Activated CD8-positive, alpha-beta T cell treated with anti-CD3 and anti-CD28 coated beads for 36 hours (primary cell): ENCODE measurements at regions of chr7 and their contacts with region 1.

Region 1: GRCh38 chr7:107168233-107169119 is at the start of gene HBP1:
- DNase-seq: peak; percentile 99
- ATAC-seq: peak; percentile 82
- H3K4me3 Mint-ChIP-seq: peak within 1 kb of the TSS; percentile 90
- H3K27ac Mint-ChIP-seq: peak within 1 kb of the TSS; percentile 99
- H3K4me1 Mint-ChIP-seq: peaks cover 20% of the 10 kb centered on the region
- H3K27me3 Mint-ChIP-seq: no peaks in the 10 kb centered on the region
- CTCF ChIP-seq: no peak
- total RNA-seq, gene HBP1: 23.8 to 30.5 TPM

Region 2: DNA sequence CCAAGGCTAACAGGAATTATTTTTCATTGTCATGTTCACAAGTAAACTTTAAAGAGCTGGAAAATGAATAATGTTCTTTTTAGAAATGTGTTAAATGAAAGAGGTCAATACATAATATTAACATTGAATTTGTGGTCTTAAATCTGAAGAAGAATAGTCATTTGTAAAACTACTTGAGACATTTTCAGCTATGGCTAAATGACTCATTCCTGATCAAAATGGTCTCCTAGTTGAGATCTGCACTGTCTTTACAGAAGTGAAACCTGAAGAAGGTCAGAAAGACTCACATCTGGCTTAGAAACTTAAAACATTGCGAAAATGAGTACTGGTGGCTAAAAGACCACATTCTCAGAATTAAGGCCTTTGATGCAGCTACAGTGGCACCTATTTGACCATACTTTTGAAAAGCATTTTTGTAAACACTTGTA is 297.5 kb before region 1 on chr7:
- CTCF ChIA-PET with region 1: no interaction called
- POLR2A ChIA-PET with region 1: interaction called, 3 read pairs
- intact Hi-C with region 1: loop called (anchors 5 kb)
- DNase-seq: no peak
- ATAC-seq: peak; percentile 85
- H3K4me3 Mint-ChIP-seq: peak overlapping the region; percentile 48
- H3K27ac Mint-ChIP-seq: peak overlapping the region; percentile 76
- H3K4me1 Mint-ChIP-seq: peaks cover 74% of the 10 kb centered on the region
- H3K27me3 Mint-ChIP-seq: no peaks in the 10 kb centered on the region
- CTCF ChIP-seq: no peak

Region 3: GRCh38 chr7:107069457-107069856 is 99.0 kb before region 1 on chr7:
- CTCF ChIA-PET with region 1: no interaction called
- POLR2A ChIA-PET with region 1: no interaction called
- intact Hi-C with region 1: no loop called
- DNase-seq: no peak
- ATAC-seq: no peak
- H3K4me3 Mint-ChIP-seq: no peak overlapping the region
- H3K27ac Mint-ChIP-seq: no peak overlapping the region
- H3K4me1 Mint-ChIP-seq: no peaks in the 10 kb centered on the region
- H3K27me3 Mint-ChIP-seq: peaks cover 2% of the 10 kb centered on the region
- CTCF ChIP-seq: no peak

Region 4: DNA sequence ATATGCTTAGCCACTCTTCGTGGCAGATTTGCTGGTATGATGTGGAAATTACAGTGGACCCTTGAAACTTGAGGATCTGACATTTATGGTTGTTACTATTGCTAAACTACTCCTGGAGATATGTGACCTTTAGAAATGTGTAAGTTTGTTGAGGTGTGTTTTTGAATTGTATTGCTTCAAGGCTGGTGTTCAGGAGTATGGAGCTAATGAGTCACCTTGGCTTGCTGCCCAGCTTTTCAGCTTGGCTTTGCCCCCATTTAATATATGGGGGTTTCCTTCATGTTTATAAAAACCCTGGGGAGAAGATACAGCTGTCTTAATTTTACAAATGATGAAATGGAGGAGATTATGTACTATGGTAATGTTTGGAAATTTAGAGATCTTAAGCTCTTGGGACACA is 11.9 kb after region 1 on chr7:
- CTCF ChIA-PET with region 1: interaction called, 15 read pairs
- POLR2A ChIA-PET with region 1: interaction called, 23 read pairs
- intact Hi-C with region 1: loop called (anchors 1 kb)
- DNase-seq: peak; percentile 95
- ATAC-seq: peak; percentile 83
- H3K4me3 Mint-ChIP-seq: peak overlapping the region; percentile 48
- H3K27ac Mint-ChIP-seq: peak overlapping the region; percentile 94
- H3K4me1 Mint-ChIP-seq: peaks cover 53% of the 10 kb centered on the region
- H3K27me3 Mint-ChIP-seq: no peaks in the 10 kb centered on the region
- CTCF ChIP-seq: no peak

Region 5: GRCh38 chr7:107372298-107372697 is 203.8 kb after region 1 on chr7:
- CTCF ChIA-PET with region 1: no interaction called
- POLR2A ChIA-PET with region 1: no interaction called
- intact Hi-C with region 1: no loop called
- DNase-seq: no peak
- ATAC-seq: no peak
- H3K4me3 Mint-ChIP-seq: no peak overlapping the region
- H3K27ac Mint-ChIP-seq: no peak overlapping the region
- H3K4me1 Mint-ChIP-seq: no peaks in the 10 kb centered on the region
- H3K27me3 Mint-ChIP-seq: no peaks in the 10 kb centered on the region
- CTCF ChIP-seq: no peak

Region 6: DNA sequence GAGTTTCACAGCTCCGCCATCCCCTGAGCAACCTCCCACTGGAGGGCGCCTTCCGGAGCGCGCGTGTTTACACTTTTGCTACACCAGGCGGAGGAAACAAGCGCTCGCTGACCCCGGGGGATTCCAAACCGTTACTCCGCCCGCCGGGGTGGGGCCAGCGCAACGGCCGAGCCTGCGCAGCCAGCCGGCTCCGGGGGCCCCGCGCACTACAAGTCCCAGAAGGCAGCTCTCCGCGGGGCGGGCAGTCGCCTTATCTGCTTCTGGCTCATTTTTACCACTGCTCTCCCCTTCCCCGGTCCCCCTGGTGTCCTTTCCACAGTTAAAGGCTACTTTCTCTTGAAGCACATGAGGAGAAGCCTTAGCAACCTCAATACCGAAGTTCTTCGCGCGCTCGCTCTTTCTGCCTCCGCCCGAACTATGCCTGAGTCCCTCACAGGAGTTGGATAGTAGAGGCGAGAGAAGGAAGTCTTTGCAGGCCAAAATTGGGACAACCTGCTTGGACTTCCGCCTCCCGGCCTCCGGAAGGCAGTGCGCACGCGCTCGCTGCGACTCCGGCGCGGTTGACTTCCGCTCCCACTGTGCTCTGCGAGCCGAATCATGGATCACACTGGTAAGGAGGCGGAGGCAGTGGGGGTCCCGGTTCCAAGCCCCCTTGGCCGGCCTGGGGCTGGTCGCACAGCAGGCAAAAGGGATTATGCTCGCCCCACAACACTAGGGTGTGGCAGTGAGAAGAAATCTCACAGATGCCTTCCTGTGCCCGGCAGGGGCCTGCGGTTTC is 575.3 kb after region 1 on chr7 and contains the start of gene CBLL1:
- CTCF ChIA-PET with region 1: interaction called, 3 read pairs
- POLR2A ChIA-PET with region 1: interaction called, 17 read pairs
- intact Hi-C with region 1: no loop called
- DNase-seq: peak; percentile 99
- ATAC-seq: peak; percentile 94
- H3K4me3 Mint-ChIP-seq: peak within 1 kb of the TSS; percentile 87
- H3K27ac Mint-ChIP-seq: peak within 1 kb of the TSS; percentile 100
- H3K4me1 Mint-ChIP-seq: peaks cover 40% of the 10 kb centered on the region
- H3K27me3 Mint-ChIP-seq: no peaks in the 10 kb centered on the region
- CTCF ChIP-seq: peak; percentile 69
- total RNA-seq, gene CBLL1: 31.7 to 38.2 TPM